ENCODE measurements at regions of chr2 and their contacts with region 1.

Region 1: DNA sequence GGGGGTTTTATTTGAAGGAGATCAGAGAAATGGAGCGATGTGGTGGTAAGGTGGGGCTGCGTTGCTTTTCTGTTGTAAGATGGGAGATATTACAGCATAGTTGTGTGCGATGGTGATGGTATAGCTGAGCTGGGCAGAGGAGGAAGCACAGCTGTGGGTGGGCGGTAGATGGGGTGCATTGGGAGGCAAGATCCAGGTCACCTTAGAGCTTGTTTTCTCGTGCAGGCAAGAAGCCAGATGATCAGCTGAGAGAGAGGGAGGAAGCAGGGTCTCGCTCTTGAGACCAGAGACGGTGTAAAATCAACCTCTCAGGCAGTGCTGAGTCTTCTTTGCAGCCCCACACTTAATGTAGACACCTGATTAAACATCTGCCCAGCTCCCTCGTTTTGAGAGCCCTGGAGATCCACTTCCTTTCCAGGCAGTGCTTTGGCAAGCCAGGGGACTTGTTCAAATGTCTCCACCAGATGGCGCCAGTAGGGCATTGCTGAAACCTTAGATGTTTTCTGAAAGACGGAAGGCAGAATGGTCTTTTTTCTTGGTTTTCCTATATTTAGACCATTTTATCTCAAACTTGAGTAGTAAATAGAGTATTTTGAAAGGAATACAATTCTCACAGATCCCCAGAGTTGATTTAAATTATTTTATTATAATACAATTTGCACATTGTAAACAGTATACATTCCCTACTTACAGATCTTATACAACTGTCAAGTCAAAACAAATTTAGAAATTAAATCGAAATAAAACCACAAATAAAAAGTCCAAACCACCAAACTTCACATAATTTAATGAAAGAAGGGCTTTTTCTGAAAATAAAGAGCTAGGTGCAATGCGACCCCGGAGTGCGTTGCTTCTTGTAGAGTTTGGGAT is 21.1 kb upstream of the LYPD6B start:
- DNase-seq: peak; percentile 24 to 71 (median 60)
- ATAC-seq: peak; percentile 82
- H3K4me3 ChIP-seq: no peak overlapping the region
- H3K4me3 Mint-ChIP-seq: no peak overlapping the region
- H3K27ac ChIP-seq: no peak overlapping the region
- H3K27ac Mint-ChIP-seq: no peak overlapping the region
- H3K4me1 ChIP-seq: no peaks in the 10 kb centered on the region
- H3K4me1 Mint-ChIP-seq: peaks cover 0 to 10% (median 5%) of the 10 kb centered on the region in 7 donors
- H3K27me3 ChIP-seq: no peaks in the 10 kb centered on the region
- H3K27me3 Mint-ChIP-seq: no peaks in the 10 kb centered on the region

Region 2: GRCh38 chr2:148909114-148909513 is 108.2 kb before region 1 on chr2:
- CTCF ChIA-PET with region 1: no interaction called
- POLR2A ChIA-PET with region 1: no interaction called
- intact Hi-C with region 1: no loop called
- DNase-seq: no peak
- ATAC-seq: no peak
- H3K4me3 ChIP-seq: no peak overlapping the region
- H3K4me3 Mint-ChIP-seq: no peak overlapping the region
- H3K27ac ChIP-seq: no peak overlapping the region
- H3K27ac Mint-ChIP-seq: no peak overlapping the region
- H3K4me1 ChIP-seq: no peaks in the 10 kb centered on the region
- H3K4me1 Mint-ChIP-seq: peaks cover 0 to 10% (median 2%) of the 10 kb centered on the region in 7 donors
- H3K27me3 ChIP-seq: no peaks in the 10 kb centered on the region
- H3K27me3 Mint-ChIP-seq: peaks cover 0 to 3% (median 0%) of the 10 kb centered on the region in 5 donors

Region 3: DNA sequence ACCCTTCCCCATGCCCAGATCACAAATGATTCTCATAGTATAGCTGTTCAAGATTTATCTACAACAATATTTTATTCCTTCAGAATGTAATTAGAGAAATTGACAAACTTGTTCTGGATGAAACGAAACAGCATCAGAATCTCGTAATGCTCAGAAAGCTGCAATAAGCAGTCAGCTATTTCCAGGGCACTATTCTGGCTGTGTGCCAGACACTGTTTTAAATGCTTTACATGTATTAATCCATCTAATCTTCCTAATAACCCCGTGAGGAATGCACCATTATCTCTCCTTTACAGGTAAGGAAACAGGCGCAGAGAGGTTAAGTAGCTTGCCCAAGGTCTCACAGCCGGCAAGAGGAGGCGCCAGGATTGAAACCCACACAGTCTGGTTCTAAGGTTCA is 11.0 kb after region 1 on chr2:
- CTCF ChIA-PET with region 1: interaction called, 10 read pairs
- POLR2A ChIA-PET with region 1: interaction called, 4 read pairs
- intact Hi-C with region 1: no loop called
- DNase-seq: no peak
- ATAC-seq: no peak
- H3K4me3 ChIP-seq: no peak overlapping the region
- H3K4me3 Mint-ChIP-seq: no peak overlapping the region
- H3K27ac ChIP-seq: no peak overlapping the region
- H3K27ac Mint-ChIP-seq: no peak overlapping the region
- H3K4me1 ChIP-seq: no peaks in the 10 kb centered on the region
- H3K4me1 Mint-ChIP-seq: peaks cover 0 to 8% (median 0%) of the 10 kb centered on the region in 7 donors
- H3K27me3 ChIP-seq: peaks cover 0 to 3% of the 10 kb centered on the region in 2 donors
- H3K27me3 Mint-ChIP-seq: peaks cover under 1 to 10% (median 7%) of the 10 kb centered on the region in 5 donors

Region 4: DNA sequence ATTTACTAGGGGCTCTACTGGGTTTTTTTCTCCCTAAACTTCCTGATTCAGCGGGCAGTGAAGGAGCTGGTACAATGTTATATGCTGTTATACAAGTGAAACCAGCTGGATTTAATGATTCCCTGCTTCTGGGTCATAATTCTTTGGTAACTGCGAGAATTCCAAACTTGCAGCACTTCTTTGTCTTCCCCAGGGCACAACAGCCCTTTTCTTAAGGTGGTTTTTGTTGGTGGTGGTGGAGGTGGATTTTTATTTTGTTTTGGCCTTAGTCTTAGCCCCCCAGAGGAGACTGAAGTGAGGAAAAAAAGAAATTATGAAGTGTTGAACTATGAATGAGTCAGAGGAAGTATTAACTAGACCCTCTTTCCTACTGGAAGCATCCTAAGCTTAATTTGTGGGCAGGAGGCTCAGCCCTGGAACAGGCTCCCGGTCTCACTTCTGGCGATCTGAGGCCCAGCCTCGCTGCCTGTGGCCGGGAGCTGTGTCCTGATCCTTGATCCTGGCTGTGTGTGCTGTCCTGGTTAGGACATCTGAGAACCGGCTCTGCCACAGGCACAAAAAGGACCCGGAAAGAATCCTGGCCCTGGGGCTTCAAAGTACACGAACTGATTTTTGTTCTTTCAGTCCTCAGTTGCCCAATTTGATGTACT is 163.0 kb after region 1 on chr2:
- CTCF ChIA-PET with region 1: no interaction called
- POLR2A ChIA-PET with region 1: no interaction called
- intact Hi-C with region 1: no loop called
- DNase-seq: no peak
- ATAC-seq: no peak
- H3K4me3 ChIP-seq: no peak overlapping the region
- H3K4me3 Mint-ChIP-seq: no peak overlapping the region
- H3K27ac ChIP-seq: no peak overlapping the region
- H3K27ac Mint-ChIP-seq: no peak overlapping the region
- H3K4me1 ChIP-seq: no peaks in the 10 kb centered on the region
- H3K4me1 Mint-ChIP-seq: no peaks in the 10 kb centered on the region
- H3K27me3 ChIP-seq: no peaks in the 10 kb centered on the region
- H3K27me3 Mint-ChIP-seq: peaks cover 0 to 13% (median 5%) of the 10 kb centered on the region in 5 donors

Region 5: GRCh38 chr2:149313512-149313972 is 296.2 kb after region 1 on chr2:
- CTCF ChIA-PET with region 1: no interaction called
- POLR2A ChIA-PET with region 1: no interaction called
- intact Hi-C with region 1: loop called (anchors 2 to 5 kb)
- DNase-seq: peak in 1 of 9 donors; percentile 2
- ATAC-seq: peak; percentile 73
- H3K4me3 ChIP-seq: no peak overlapping the region
- H3K4me3 Mint-ChIP-seq: no peak overlapping the region
- H3K27ac ChIP-seq: no peak overlapping the region
- H3K27ac Mint-ChIP-seq: no peak overlapping the region
- H3K4me1 ChIP-seq: no peaks in the 10 kb centered on the region
- H3K4me1 Mint-ChIP-seq: peaks cover 0 to 6% (median 3%) of the 10 kb centered on the region in 7 donors
- H3K27me3 ChIP-seq: no peaks in the 10 kb centered on the region
- H3K27me3 Mint-ChIP-seq: peaks cover 10 to 25% (median 21%) of the 10 kb centered on the region in 5 donors

Measured in naive thymus-derived CD4-positive, alpha-beta T cell (primary cell).